RWPE1 (cell line): ENCODE measurements at regions of chr5 and their contacts with region 1.

Region 1: GRCh38 chr5:139592289-139592688 is 31.1 kb downstream of the UBE2D2 start:
- DNase-seq: no peak
- H3K27ac ChIP-seq: peak overlapping the region; percentile 54
- CTCF ChIP-seq: no peak

Region 2: DNA sequence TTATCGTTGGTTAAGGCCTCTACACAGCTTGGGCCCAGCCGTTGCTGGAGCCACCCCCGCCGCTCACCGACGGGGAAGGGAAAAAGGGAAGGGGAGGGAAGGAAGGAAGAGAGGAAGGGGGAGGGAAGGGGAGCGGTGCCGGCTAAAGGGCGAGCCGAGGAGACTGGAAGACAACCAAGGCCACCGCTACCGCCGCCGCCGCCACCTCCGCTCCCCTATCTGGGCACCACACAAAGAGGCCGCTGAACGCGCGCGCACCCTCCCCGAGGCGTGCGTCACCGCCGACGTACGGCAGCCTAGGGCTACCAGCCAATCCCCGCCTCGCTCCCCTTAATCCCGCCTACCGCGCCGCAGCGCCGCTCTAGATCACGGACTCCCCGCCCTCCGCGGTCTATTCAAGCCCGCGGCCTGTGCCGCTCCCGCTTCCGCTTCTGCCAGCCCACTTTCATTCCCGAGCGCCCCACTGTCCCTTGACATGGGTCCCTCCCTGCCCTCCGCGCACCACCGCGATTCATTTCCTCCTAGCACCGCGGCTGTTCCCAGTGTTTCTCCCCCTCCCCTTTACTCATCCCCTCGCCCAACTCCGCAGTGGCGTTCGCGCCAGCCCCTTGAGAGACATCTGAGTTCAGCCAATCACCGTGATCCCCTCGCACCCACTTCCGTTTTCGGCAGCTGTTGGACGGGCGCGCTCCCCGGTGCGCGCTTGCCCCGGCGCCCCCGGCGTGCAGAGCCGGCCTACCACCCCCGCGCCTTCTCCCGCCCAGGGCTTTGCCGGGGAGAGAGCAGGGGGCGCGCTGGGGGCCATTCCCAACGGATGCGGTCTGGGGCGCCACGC is 1837.9 kb before region 1 on chr5 and contains the start of gene HNRNPA0:
- CTCF ChIA-PET with region 1: no interaction called
- POLR2A ChIA-PET with region 1: interaction called, 13 read pairs
- DNase-seq: peak; percentile 99
- H3K27ac ChIP-seq: peak within 1 kb of the TSS; percentile 97
- CTCF ChIP-seq: no peak

Region 3: GRCh38 chr5:139660923-139661814 is 68.9 kb after region 1 on chr5:
- CTCF ChIA-PET with region 1: no interaction called
- POLR2A ChIA-PET with region 1: no interaction called
- DNase-seq: peak; percentile 96
- H3K27ac ChIP-seq: peak overlapping the region; percentile 94
- CTCF ChIP-seq: no peak